Ovary (tissue), 10 donors: ENCODE measurements at regions of chr10 and their contacts with region 1.

Region 1: DNA sequence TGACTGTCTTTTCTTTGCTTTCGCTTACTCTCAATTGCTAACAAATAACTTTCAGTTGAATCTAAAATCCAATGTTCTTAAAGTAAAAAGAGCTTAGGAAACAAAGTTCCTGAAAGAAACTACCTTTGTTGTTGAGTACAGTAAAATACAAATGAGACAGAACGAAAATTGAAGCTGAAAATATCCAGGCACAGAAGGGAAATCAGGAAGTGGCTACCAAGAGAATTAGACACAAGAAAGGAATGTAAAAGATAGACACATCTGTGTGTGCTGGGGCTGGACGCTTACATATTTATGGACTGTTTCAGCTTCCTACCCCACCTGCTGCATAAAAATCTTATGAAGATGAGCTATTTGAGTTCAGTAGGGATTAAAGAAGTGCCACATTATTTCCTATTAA is 161.7 kb upstream of the PLXDC2 start:
- DNase-seq: no peak
- H3K4me3 ChIP-seq: no peak overlapping the region
- H3K27ac ChIP-seq: no peak overlapping the region
- H3K4me1 ChIP-seq: no peaks in the 10 kb centered on the region
- H3K27me3 ChIP-seq: no peaks in the 10 kb centered on the region
- CTCF ChIP-seq: no peak
- EP300 ChIP-seq: no peak
- POLR2A ChIP-seq: no peak

Region 2: GRCh38 chr10:19705250-19705649 is 50.7 kb after region 1 on chr10:
- intact Hi-C with region 1: no loop called
- DNase-seq: no peak
- H3K4me3 ChIP-seq: no peak overlapping the region
- H3K27ac ChIP-seq: no peak overlapping the region
- H3K4me1 ChIP-seq: no peaks in the 10 kb centered on the region
- H3K27me3 ChIP-seq: no peaks in the 10 kb centered on the region
- CTCF ChIP-seq: no peak
- EP300 ChIP-seq: no peak
- POLR2A ChIP-seq: no peak

Region 3: DNA sequence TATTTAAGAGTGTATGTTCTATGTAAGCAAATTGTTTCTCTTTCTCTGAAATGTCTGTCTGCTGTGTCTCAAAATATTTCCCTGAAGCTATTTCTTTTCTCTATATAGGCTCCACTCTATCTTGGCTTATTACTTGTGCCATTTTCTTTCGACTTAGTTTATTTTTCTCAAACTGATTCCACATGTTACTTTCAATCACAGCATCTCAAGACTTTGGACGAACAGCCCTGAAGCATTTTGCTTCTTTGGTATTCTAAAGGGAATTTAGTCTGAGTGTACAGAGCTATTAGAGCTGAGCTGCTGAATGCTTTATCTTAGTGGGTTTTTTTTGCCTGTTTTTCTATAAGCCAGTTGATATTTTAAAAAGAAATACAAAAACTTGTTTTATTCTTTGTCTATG is 257.3 kb after region 1 on chr10:
- intact Hi-C with region 1: loop called in 1 of 4 experiments (anchors 5 kb)
- DNase-seq: no peak
- H3K4me3 ChIP-seq: no peak overlapping the region
- H3K27ac ChIP-seq: no peak overlapping the region
- H3K4me1 ChIP-seq: no peaks in the 10 kb centered on the region
- H3K27me3 ChIP-seq: no peaks in the 10 kb centered on the region
- CTCF ChIP-seq: no peak
- EP300 ChIP-seq: no peak
- POLR2A ChIP-seq: no peak